ENCODE measurements at regions of chr20 and their contacts with region 1.

Region 1: DNA sequence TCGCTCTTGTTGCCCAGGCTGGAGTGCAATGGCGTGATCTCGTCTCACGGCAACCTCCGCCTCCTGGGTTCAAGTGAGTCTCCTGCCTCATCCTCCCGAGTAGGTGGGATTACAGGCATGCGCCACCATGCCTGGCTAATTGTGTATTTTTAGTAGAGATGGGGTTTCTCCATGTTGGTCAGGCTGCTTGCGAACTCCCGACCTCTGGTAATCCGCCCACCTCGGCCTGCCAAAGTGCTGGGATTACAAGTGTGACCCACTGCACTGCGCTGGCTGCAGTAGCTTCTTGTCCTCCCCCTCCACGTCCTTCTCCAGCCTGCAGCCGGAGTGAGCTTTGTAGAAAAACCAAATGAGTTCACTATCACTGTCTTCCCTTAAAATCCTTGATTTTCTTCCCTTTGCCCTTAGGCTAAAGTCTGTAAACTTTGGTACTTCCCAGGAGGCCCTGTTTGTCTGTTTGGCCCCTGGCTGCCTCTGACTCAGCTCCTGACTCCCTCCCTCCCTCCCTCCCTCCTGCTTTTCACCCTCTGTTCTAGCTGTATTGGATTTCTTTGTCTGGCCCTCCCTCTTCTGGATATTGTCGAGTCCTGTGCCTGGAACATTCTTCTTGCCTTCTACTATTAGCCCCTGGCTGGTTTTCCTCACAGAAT is 12.9 kb downstream of the PARD6B start:
- DNase-seq: peak; percentile 43 to 75
- ATAC-seq: peak; percentile 65

Region 2: GRCh38 chr20:50484276-50484976 is 259.8 kb before region 1 on chr20:
- intact Hi-C with region 1: loop called in 1 of 2 experiments (anchors 10 kb)
- DNase-seq: no peak
- ATAC-seq: peak; percentile 28

Region 3: DNA sequence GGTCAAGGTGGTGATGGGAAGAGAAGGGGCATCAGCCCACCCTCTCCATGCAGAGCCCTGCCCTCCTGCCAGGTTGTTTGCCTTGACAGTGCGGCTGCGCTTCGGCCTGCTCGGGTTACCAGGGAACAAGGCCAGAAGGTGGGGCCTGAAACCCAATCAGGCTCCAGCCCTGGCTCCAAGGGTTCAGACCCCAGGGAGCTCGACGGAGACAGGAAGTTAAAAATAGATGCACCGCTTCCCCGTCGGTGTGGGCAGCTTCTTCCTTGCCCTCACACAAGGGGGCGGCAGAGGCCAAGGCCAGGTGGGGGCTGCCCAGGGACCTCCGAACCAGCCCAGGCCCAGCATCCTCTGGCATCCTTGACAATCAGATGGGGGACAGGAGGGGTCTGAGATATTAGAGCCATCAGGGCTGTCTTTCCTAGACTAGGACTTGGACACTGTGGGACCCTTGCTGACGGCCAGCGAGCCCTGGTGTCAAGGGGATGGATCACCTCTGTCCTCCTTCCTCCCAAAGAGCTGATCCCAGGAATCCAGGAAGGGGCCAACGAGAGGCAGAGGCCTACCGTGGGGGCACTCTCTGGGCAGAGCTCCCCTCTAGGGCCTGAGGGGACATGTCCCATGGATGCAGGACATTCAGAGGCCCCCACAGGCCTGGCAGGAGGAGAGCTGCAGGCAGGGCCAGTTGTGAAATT is 118.1 kb before region 1 on chr20:
- intact Hi-C with region 1: loop called in 1 of 2 experiments (anchors 10 kb)
- DNase-seq: peak; percentile 35 to 36
- ATAC-seq: peak; percentile 41

Region 4: GRCh38 chr20:50815162-50815989 is 71.1 kb after region 1 on chr20:
- intact Hi-C with region 1: no loop called
- DNase-seq: peak in 1 of 2 donors; percentile 38
- ATAC-seq: no peak

Region 5: GRCh38 chr20:50879649-50880550 is 135.6 kb after region 1 on chr20:
- intact Hi-C with region 1: no loop called
- DNase-seq: no peak
- ATAC-seq: no peak